Mammary epithelial cell (primary cell): ENCODE measurements at regions of chr11 and their contacts with region 1.

Region 1: GRCh38 chr11:131064373-131064991 is 148.2 kb upstream of the SNX19 start:
- DNase-seq: peak; percentile 43
- H3K4me3 ChIP-seq: no peak overlapping the region
- H3K27ac ChIP-seq: no peak overlapping the region
- H3K4me1 ChIP-seq: no peaks in the 10 kb centered on the region
- H3K27me3 ChIP-seq: no peaks in the 10 kb centered on the region
- CTCF ChIP-seq: peak; percentile 97

Region 2: DNA sequence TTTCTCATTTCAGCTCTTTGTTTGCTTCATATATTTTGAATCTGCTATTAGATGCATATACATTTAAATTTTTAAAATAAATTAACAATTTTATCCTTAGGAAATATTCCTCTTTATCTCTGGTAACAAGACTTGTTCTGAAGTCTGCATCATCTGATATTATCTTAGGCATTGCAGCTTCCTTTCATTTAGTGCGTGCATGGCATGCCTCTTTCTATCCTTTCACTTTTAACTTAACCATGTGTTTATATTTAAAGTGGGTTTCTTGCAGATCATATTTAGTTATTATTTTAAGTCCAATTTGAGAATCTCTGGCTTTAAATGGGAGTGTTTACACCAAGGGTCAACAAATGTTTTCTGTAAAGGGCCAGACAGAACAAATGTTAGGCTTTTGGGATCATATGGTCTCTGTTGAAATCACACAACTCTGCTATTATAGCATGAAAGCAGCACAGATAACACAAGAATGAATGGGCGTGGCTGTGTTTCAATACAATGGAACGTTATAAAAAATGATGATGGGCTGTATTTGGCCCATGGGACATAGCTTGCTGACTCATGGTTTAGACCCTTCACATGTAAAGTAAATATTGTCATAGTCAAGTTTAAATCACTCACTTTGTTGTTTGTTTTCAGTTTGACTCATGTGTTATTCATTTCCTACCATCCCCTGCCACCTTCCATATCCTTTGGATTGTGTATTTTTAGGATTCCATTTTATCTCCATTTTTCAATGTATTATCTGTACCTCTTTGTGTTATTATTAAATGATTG is 64.3 kb before region 1 on chr11:
- CTCF ChIA-PET with region 1: no interaction called
- dilution Hi-C with region 1: no loop called
- in situ Hi-C with region 1: no loop called
- intact Hi-C with region 1: no loop called
- DNase-seq: peak; percentile 88
- H3K4me3 ChIP-seq: no peak overlapping the region
- H3K27ac ChIP-seq: peak overlapping the region; percentile 78
- H3K4me1 ChIP-seq: peaks cover 43% of the 10 kb centered on the region
- H3K27me3 ChIP-seq: no peaks in the 10 kb centered on the region
- CTCF ChIP-seq: no peak

Region 3: DNA sequence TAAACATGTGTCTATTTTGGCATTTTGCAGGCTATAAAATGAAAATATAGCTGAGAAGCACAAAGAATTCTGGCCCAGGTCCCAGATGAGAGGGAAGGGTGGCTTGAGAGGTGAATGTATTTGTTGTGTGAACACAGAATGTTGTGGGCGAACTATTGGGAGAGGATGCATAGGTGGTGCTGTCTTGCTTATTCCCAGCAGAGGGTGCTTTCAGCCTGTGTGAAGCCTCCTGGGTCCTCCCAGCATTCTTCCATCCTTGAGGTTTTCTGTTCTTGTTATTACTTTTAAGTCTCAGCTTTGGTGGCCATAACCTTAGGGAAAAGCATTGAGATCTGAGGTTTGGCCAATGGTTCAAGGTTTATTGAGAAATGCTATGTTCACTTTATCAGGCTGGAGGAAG is 39.5 kb before region 1 on chr11:
- CTCF ChIA-PET with region 1: no interaction called
- dilution Hi-C with region 1: no loop called
- in situ Hi-C with region 1: no loop called
- intact Hi-C with region 1: loop called (anchors 1 kb)
- DNase-seq: peak; percentile 49
- H3K4me3 ChIP-seq: no peak overlapping the region
- H3K27ac ChIP-seq: no peak overlapping the region
- H3K4me1 ChIP-seq: peaks cover 3% of the 10 kb centered on the region
- H3K27me3 ChIP-seq: no peaks in the 10 kb centered on the region
- CTCF ChIP-seq: peak; percentile 84 to 88

Region 4: DNA sequence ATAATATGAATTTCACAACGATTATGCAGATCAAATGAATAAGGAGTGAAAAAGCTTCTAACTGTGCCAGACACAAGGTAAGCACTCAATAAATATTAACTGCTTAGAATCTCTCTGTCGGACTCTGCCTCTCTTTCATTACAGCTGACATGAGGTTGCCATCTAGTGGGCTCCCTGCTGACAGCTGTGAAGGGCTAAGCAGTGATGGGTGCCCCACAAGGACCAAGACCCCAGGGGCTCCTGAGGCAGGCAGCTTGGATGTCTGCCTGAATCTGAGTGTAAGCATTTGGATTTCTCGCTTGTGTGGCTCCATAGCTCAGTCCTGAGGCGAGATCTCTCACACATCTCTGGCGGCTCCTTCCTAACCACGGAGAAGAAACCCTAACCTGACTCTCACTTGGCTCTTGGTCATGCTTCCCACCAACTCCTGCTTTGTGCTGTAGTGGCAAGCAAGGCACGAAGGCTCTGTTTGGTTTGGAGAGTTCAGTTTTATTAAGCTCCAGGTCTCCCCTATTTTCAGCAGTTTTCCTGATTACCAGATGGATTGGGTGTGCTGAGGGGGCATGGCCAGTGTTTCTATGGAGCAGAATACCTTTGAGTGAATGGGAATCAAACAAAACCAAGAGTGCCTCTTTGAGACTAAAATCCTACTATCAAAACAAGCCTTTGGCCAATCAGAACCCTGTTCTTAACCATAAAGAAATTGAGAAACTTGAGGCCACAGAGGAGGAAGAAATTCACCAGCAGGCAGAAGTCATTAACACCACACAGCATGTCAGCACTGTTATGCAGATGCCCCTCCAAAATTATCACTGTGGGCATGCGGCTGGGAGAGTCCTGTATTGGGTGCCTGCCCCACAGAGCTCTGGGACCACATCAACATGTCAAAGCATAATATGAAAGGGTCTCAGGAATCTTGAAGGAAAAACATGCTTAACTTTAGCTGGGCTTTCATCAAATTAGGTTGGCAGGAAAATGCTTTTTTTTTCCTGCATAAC is 153.1 kb after region 1 on chr11:
- CTCF ChIA-PET with region 1: no interaction called
- dilution Hi-C with region 1: no loop called
- in situ Hi-C with region 1: no loop called
- intact Hi-C with region 1: loop called (anchors 1 kb)
- DNase-seq: no peak
- H3K4me3 ChIP-seq: no peak overlapping the region
- H3K27ac ChIP-seq: no peak overlapping the region
- H3K4me1 ChIP-seq: no peaks in the 10 kb centered on the region
- H3K27me3 ChIP-seq: no peaks in the 10 kb centered on the region
- CTCF ChIP-seq: peak; percentile 12 to 52

Region 5: GRCh38 chr11:131408025-131408640 is 343.7 kb after region 1 on chr11:
- CTCF ChIA-PET with region 1: no interaction called
- dilution Hi-C with region 1: no loop called
- in situ Hi-C with region 1: no loop called
- intact Hi-C with region 1: loop called (anchors 2 kb)
- DNase-seq: peak; percentile 6
- H3K4me3 ChIP-seq: no peak overlapping the region
- H3K27ac ChIP-seq: no peak overlapping the region
- H3K4me1 ChIP-seq: no peaks in the 10 kb centered on the region
- H3K27me3 ChIP-seq: no peaks in the 10 kb centered on the region
- CTCF ChIP-seq: peak; percentile 51 to 66

Region 6: DNA sequence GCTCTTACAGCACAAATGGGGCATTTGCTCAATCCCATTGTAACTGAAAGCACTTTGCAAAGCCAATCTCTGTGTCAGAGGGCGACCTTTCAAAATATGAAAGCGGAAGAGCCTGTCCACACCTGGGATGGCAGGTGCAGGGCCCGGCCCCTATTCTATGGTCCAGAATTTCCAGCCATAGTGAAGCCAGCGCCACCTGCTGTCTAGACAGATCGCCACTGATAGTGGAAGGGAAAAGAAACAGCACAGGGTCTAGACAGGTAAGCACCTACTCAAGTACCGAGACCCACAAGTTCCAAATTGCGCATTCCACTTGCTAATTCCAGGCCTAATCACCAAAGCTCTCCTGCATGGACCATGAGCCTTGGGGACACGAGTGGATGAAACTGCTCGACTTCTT is 447.3 kb after region 1 on chr11:
- CTCF ChIA-PET with region 1: no interaction called
- dilution Hi-C with region 1: no loop called
- in situ Hi-C with region 1: no loop called
- intact Hi-C with region 1: loop called (anchors 1 kb)
- DNase-seq: no peak
- H3K4me3 ChIP-seq: no peak overlapping the region
- H3K27ac ChIP-seq: no peak overlapping the region
- H3K4me1 ChIP-seq: no peaks in the 10 kb centered on the region
- H3K27me3 ChIP-seq: no peaks in the 10 kb centered on the region
- CTCF ChIP-seq: peak; percentile 34 to 61